ENCODE measurements at regions of chr18 and their contacts with region 1.

Region 1: GRCh38 chr18:58863539-58864145 is 1.0 kb upstream of the ZNF532 start:
- DNase-seq: peak; percentile 77
- ATAC-seq: peak; percentile 67
- H3K4me3 ChIP-seq: peak overlapping the region in 4 of 5 experiments; percentile 26 to 57 (median 52)
- H3K4me3 Mint-ChIP-seq: peak overlapping the region; percentile 83
- H3K27ac ChIP-seq: peak overlapping the region; percentile 38 to 81
- H3K27ac Mint-ChIP-seq: peak overlapping the region; percentile 91
- H3K4me1 ChIP-seq: peaks cover 20 to 24% of the 10 kb centered on the region in 2 donors
- H3K4me1 Mint-ChIP-seq: peaks cover 41% of the 10 kb centered on the region
- H3K27me3 ChIP-seq: no peaks in the 10 kb centered on the region
- H3K27me3 Mint-ChIP-seq: no peaks in the 10 kb centered on the region
- CTCF ChIP-seq: no peak

Region 2: DNA sequence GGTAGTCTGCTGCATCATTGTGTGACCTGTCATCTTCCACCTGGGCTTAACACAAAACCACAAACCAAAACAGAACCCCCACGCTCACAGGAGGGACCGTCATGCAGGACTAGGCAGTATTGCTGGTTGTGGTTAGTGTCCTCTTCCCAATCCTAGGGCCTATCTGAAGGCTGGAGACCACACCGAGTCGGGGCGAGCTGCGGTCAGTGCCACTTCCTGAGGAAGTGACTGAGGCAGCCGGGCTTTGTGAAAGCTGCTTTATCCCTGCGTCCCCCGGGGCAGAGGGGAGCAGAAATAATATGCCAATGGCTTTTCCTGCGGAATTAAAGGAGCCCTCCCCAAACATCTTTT is 23.9 kb after region 1 on chr18:
- CTCF ChIA-PET with region 1: interaction called, 3 read pairs
- POLR2A ChIA-PET with region 1: interaction called, 10 read pairs
- intact Hi-C with region 1: no loop called
- DNase-seq: peak; percentile 63
- ATAC-seq: peak; percentile 84
- H3K4me3 ChIP-seq: peak overlapping the region in 2 of 5 experiments; percentile 5 to 22
- H3K4me3 Mint-ChIP-seq: peak overlapping the region; percentile 68
- H3K27ac ChIP-seq: peak overlapping the region; percentile 31 to 54
- H3K27ac Mint-ChIP-seq: peak overlapping the region; percentile 84
- H3K4me1 ChIP-seq: peaks cover 20 to 28% of the 10 kb centered on the region in 2 donors
- H3K4me1 Mint-ChIP-seq: peaks cover 30% of the 10 kb centered on the region
- H3K27me3 ChIP-seq: no peaks in the 10 kb centered on the region
- H3K27me3 Mint-ChIP-seq: no peaks in the 10 kb centered on the region
- CTCF ChIP-seq: no peak

Region 3: GRCh38 chr18:58896268-58896667 is 32.6 kb after region 1 on chr18:
- CTCF ChIA-PET with region 1: interaction called, 4 read pairs
- POLR2A ChIA-PET with region 1: interaction called, 6 read pairs
- intact Hi-C with region 1: loop called (anchors 2 kb)
- DNase-seq: peak; percentile 72
- ATAC-seq: peak; percentile 88
- H3K4me3 ChIP-seq: peak overlapping the region in 4 of 5 experiments; percentile 31 to 58 (median 50)
- H3K4me3 Mint-ChIP-seq: peak overlapping the region; percentile 79
- H3K27ac ChIP-seq: peak overlapping the region; percentile 70 to 86
- H3K27ac Mint-ChIP-seq: peak overlapping the region; percentile 86
- H3K4me1 ChIP-seq: peaks cover 58 to 62% of the 10 kb centered on the region in 2 donors
- H3K4me1 Mint-ChIP-seq: peaks cover 76% of the 10 kb centered on the region
- H3K27me3 ChIP-seq: no peaks in the 10 kb centered on the region
- H3K27me3 Mint-ChIP-seq: no peaks in the 10 kb centered on the region
- CTCF ChIP-seq: no peak

Region 4: GRCh38 chr18:58967751-58968254 is 104.2 kb after region 1 on chr18:
- CTCF ChIA-PET with region 1: no interaction called
- POLR2A ChIA-PET with region 1: interaction called, 3 read pairs
- intact Hi-C with region 1: loop called (anchors 1 kb)
- DNase-seq: no peak
- ATAC-seq: no peak
- H3K4me3 ChIP-seq: no peak overlapping the region
- H3K4me3 Mint-ChIP-seq: peak overlapping the region; percentile 75
- H3K27ac ChIP-seq: peak overlapping the region; percentile 94 to 99
- H3K27ac Mint-ChIP-seq: peak overlapping the region; percentile 95
- H3K4me1 ChIP-seq: peaks cover 86 to 88% of the 10 kb centered on the region in 2 donors
- H3K4me1 Mint-ChIP-seq: peaks cover 86% of the 10 kb centered on the region
- H3K27me3 ChIP-seq: no peaks in the 10 kb centered on the region
- H3K27me3 Mint-ChIP-seq: no peaks in the 10 kb centered on the region
- CTCF ChIP-seq: no peak

Region 5: GRCh38 chr18:59008301-59008974 is 144.8 kb after region 1 on chr18:
- CTCF ChIA-PET with region 1: no interaction called
- POLR2A ChIA-PET with region 1: interaction called, 22 read pairs
- intact Hi-C with region 1: no loop called
- DNase-seq: no peak
- ATAC-seq: no peak
- H3K4me3 ChIP-seq: no peak overlapping the region
- H3K4me3 Mint-ChIP-seq: no peak overlapping the region
- H3K27ac ChIP-seq: no peak overlapping the region
- H3K27ac Mint-ChIP-seq: no peak overlapping the region
- H3K4me1 ChIP-seq: no peaks in the 10 kb centered on the region
- H3K4me1 Mint-ChIP-seq: peaks cover 9% of the 10 kb centered on the region
- H3K27me3 ChIP-seq: no peaks in the 10 kb centered on the region
- H3K27me3 Mint-ChIP-seq: no peaks in the 10 kb centered on the region
- CTCF ChIP-seq: no peak

Region 6: GRCh38 chr18:59085797-59086196 is 222.2 kb after region 1 on chr18:
- CTCF ChIA-PET with region 1: no interaction called
- POLR2A ChIA-PET with region 1: no interaction called
- intact Hi-C with region 1: no loop called
- DNase-seq: no peak
- ATAC-seq: no peak
- H3K4me3 ChIP-seq: no peak overlapping the region
- H3K4me3 Mint-ChIP-seq: no peak overlapping the region
- H3K27ac ChIP-seq: no peak overlapping the region
- H3K27ac Mint-ChIP-seq: no peak overlapping the region
- H3K4me1 ChIP-seq: peaks cover 15 to 19% of the 10 kb centered on the region in 2 donors
- H3K4me1 Mint-ChIP-seq: peaks cover 29% of the 10 kb centered on the region
- H3K27me3 ChIP-seq: peaks cover 0 to 5% (median 0%) of the 10 kb centered on the region in 4 experiments
- H3K27me3 Mint-ChIP-seq: peaks cover 6% of the 10 kb centered on the region
- CTCF ChIP-seq: no peak